ENCODE measurements at regions of chr5 and their contacts with region 1.

Region 1: GRCh38 chr5:24444414-24444813 is 200.4 kb downstream of the CDH10 start:
- DNase-seq: no peak
- H3K4me3 ChIP-seq: no peak overlapping the region
- H3K4me3 Mint-ChIP-seq: no peak overlapping the region
- H3K27ac Mint-ChIP-seq: no peak overlapping the region
- H3K4me1 ChIP-seq: no peaks in the 10 kb centered on the region
- H3K4me1 Mint-ChIP-seq: no peaks in the 10 kb centered on the region
- H3K27me3 ChIP-seq: no peaks in the 10 kb centered on the region
- H3K27me3 Mint-ChIP-seq: peaks cover 13% of the 10 kb centered on the region
- CTCF ChIP-seq: no peak

Region 2: DNA sequence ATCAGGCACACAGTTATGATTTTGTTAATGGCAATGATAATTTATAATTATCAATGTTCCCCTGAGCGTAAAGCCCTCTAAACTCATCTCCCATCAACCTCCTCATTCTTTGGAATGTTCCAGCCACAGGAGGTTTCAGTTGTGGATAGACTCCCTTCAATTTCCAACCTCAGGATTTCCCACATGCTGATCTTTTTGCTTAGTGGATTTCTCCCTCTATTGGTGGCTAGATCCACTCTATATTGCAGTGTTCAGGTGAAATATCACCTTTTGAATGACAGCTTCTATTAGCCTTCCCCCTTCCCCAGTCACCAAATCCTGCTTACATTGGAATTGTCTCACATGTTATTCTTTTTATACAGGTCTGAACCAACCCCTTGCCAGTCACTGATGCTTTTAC is 86.5 kb after region 1 on chr5:
- CTCF ChIA-PET with region 1: no interaction called
- POLR2A ChIA-PET with region 1: no interaction called
- intact Hi-C with region 1: loop called (anchors 1 kb)
- DNase-seq: no peak
- H3K4me3 ChIP-seq: no peak overlapping the region
- H3K4me3 Mint-ChIP-seq: no peak overlapping the region
- H3K27ac Mint-ChIP-seq: no peak overlapping the region
- H3K4me1 ChIP-seq: no peaks in the 10 kb centered on the region
- H3K4me1 Mint-ChIP-seq: no peaks in the 10 kb centered on the region
- H3K27me3 ChIP-seq: no peaks in the 10 kb centered on the region
- H3K27me3 Mint-ChIP-seq: no peaks in the 10 kb centered on the region
- CTCF ChIP-seq: no peak

Region 3: DNA sequence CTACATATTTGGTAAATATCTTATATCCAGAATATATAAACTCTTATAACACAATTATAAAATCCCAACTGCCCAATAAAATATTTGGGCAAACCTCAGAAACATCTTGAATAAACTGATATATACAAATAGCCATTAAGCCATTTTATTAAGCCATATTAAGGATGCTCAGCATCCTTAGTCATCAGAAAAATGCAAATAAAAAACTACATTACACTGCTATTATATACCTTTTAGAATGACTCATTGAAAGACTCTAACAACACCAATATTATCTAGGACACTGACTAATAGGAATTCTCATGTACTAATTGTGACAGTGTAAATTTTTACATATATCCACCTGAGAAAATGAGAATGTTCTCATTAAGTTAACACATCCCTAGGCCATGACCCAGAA is 122.5 kb after region 1 on chr5:
- CTCF ChIA-PET with region 1: no interaction called
- POLR2A ChIA-PET with region 1: no interaction called
- intact Hi-C with region 1: loop called (anchors 2 kb)
- DNase-seq: no peak
- H3K4me3 ChIP-seq: no peak overlapping the region
- H3K4me3 Mint-ChIP-seq: no peak overlapping the region
- H3K27ac Mint-ChIP-seq: no peak overlapping the region
- H3K4me1 ChIP-seq: no peaks in the 10 kb centered on the region
- H3K4me1 Mint-ChIP-seq: no peaks in the 10 kb centered on the region
- H3K27me3 ChIP-seq: no peaks in the 10 kb centered on the region
- H3K27me3 Mint-ChIP-seq: peaks cover 4% of the 10 kb centered on the region
- CTCF ChIP-seq: no peak

Region 4: GRCh38 chr5:24642022-24642421 is 197.6 kb after region 1 on chr5:
- CTCF ChIA-PET with region 1: no interaction called
- POLR2A ChIA-PET with region 1: no interaction called
- intact Hi-C with region 1: loop called (anchors 1 kb)
- DNase-seq: peak in 1 of 2 experiments; percentile 25
- H3K4me3 ChIP-seq: no peak overlapping the region
- H3K4me3 Mint-ChIP-seq: no peak overlapping the region
- H3K27ac Mint-ChIP-seq: no peak overlapping the region
- H3K4me1 ChIP-seq: no peaks in the 10 kb centered on the region
- H3K4me1 Mint-ChIP-seq: no peaks in the 10 kb centered on the region
- H3K27me3 ChIP-seq: no peaks in the 10 kb centered on the region
- H3K27me3 Mint-ChIP-seq: peaks cover 3% of the 10 kb centered on the region
- CTCF ChIP-seq: peak; percentile 42 to 47

Region 5: DNA sequence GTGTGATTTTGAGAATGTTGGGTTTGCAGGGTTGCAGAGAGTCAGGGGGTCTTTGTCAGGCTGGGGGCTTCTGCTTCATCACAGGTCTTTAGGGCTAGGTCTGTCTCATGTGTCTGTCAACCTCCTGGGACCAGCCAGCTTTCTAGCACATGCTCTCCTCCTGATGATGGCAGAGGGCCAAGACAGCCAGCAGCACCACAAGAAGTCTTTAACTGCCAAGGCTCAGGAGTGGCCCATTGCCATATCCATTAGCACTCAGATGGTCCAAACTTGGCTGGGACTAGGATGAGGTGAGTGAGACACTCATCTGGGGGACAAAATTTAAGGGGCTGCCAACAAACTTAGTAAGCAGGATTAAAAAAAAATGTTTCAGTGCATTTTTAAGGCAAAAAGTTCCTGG is 584.6 kb after region 1 on chr5:
- CTCF ChIA-PET with region 1: no interaction called
- POLR2A ChIA-PET with region 1: no interaction called
- intact Hi-C with region 1: no loop called
- DNase-seq: no peak
- H3K4me3 ChIP-seq: no peak overlapping the region
- H3K4me3 Mint-ChIP-seq: no peak overlapping the region
- H3K27ac Mint-ChIP-seq: no peak overlapping the region
- H3K4me1 ChIP-seq: no peaks in the 10 kb centered on the region
- H3K4me1 Mint-ChIP-seq: no peaks in the 10 kb centered on the region
- H3K27me3 ChIP-seq: no peaks in the 10 kb centered on the region
- H3K27me3 Mint-ChIP-seq: peaks cover 3% of the 10 kb centered on the region
- CTCF ChIP-seq: no peak